Esophagus muscularis mucosa (tissue), 4 donors: ENCODE measurements at regions of chr19 and their contacts with region 1.

Region 1: DNA sequence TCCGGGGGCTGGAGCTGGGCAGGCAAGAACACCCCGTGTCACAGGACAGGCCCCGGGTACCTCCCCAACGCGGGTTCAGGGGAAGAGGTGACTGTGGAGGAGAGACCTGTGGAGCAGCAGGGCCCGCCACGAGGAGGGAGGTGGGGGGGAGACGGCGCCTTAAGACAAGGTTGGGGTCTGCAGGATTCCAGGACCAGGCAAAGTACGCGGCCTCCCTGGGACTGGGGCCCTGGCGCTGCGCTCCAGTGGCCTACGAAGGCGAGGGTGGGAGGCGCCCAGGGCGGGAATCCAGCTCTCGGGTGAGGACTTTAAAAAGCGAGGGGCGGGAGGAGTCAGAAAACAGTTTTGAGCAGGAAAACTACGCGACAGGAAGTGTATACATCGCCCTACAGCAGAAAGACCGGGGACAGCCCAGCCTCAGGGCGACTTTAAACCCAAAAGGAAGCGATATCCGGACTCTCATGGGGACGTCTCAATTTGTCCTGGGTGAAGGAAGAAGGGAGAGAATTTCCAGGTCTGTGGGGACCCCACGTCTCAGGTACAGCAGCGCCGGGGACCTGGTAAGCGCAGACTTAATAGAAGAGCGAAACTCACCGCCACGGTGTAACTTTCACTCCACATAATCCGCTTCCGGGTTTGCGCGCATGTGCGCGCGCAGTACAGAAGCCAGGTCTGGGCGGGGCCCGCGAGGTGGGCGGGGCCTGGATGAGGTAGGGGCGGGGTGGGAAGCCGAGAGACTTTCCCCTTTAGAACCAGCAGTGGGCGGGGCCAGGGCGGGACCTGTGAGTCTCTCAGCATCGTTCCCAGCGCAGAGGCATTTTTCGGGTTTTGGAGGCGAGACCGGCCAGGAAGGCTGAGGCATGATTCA is at the start of gene ZNF83:
- DNase-seq: peak; percentile 99
- H3K4me3 ChIP-seq: peak within 1 kb of the TSS; percentile 65 to 76 (median 74)
- H3K27ac ChIP-seq: peak within 1 kb of the TSS; percentile 68 to 94 (median 86)
- H3K4me1 ChIP-seq: peaks cover 13 to 21% (median 19%) of the 10 kb centered on the region in 4 donors
- H3K27me3 ChIP-seq: no peaks in the 10 kb centered on the region
- CTCF ChIP-seq: peak in 1 of 3 experiments; percentile 12
- EP300 ChIP-seq: no peak
- POLR2A ChIP-seq: no peak
- total RNA-seq, gene ZNF83: 29.7 to 55.6 (median 34.1) TPM

Region 2: DNA sequence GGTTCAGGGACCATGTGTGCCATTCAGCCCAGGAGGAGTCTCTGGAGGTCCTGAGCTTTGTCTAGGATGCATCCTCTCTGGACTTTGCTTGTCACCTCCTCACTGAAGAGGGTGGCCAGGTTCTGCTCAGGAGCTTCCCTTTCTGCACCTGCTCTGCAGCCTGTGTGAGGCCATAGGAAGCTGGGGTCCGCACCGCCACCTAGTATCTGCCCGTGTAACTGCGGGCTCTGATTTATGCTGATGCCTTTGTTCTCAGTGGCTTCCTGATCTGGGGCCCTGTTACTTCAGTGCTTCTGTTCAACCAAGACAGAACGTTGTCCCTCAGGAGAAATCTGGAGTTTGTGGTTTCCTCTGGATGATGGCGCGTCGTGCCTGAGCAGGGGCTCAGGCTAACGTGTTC is 286.4 kb before region 1 on chr19:
- intact Hi-C with region 1: no loop called
- DNase-seq: no peak
- H3K4me3 ChIP-seq: no peak overlapping the region
- H3K27ac ChIP-seq: no peak overlapping the region
- H3K4me1 ChIP-seq: no peaks in the 10 kb centered on the region
- H3K27me3 ChIP-seq: no peaks in the 10 kb centered on the region
- CTCF ChIP-seq: no peak
- EP300 ChIP-seq: no peak
- POLR2A ChIP-seq: no peak

Region 3: GRCh38 chr19:52527134-52527955 is 110.6 kb before region 1 on chr19 and contains the start of gene ZNF808:
- intact Hi-C with region 1: no loop called
- DNase-seq: peak; percentile 99
- H3K4me3 ChIP-seq: peak within 1 kb of the TSS; percentile 68 to 81 (median 74)
- H3K27ac ChIP-seq: peak within 1 kb of the TSS; percentile 83 to 95 (median 92)
- H3K4me1 ChIP-seq: peaks cover 12 to 27% (median 16%) of the 10 kb centered on the region in 4 donors
- H3K27me3 ChIP-seq: no peaks in the 10 kb centered on the region
- CTCF ChIP-seq: peak; percentile 49 to 70 (median 70)
- EP300 ChIP-seq: no peak
- POLR2A ChIP-seq: no peak
- total RNA-seq, gene ZNF808: 11.3 to 18.7 (median 14.2) TPM

Region 4: GRCh38 chr19:52601025-52601973 is 36.7 kb before region 1 on chr19:
- intact Hi-C with region 1: loop called (anchors 5 kb)
- DNase-seq: peak; percentile 98
- H3K4me3 ChIP-seq: peak overlapping the region; percentile 65 to 82 (median 72)
- H3K27ac ChIP-seq: peak overlapping the region; percentile 76 to 87 (median 82)
- H3K4me1 ChIP-seq: peaks cover 14 to 23% (median 18%) of the 10 kb centered on the region in 4 donors
- H3K27me3 ChIP-seq: no peaks in the 10 kb centered on the region
- CTCF ChIP-seq: peak; percentile 4 to 51 (median 38)
- EP300 ChIP-seq: no peak
- POLR2A ChIP-seq: no peak